WTC11 (cell line): ENCODE measurements at regions of chr22 and their contacts with region 1.

Region 1: DNA sequence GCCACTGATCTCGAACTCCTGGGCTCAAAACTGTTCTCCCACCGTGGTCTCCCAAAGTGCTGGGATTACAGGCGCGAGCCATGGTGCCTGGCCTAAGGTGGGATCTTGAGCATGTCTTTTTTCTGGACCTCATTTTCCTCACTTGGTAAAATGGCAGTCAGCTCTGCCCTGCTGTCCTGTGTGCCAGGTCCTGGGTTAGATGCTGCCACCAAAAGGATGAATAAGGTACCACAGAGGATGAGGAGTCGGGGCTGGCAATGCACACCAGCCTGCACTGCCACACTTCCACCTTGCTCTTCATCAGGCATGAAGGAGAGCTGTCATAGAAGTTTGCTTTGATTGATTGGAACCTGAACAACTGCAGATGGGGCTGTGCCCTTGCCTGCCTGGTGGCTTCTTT is 32.3 kb downstream of the ACO2 start:
- DNase-seq: no peak
- ATAC-seq: peak; percentile 78
- H3K4me3 Mint-ChIP-seq: no peak overlapping the region
- H3K27ac Mint-ChIP-seq: no peak overlapping the region
- H3K4me1 Mint-ChIP-seq: no peaks in the 10 kb centered on the region
- H3K27me3 Mint-ChIP-seq: no peaks in the 10 kb centered on the region
- CTCF ChIP-seq: no peak

Region 2: GRCh38 chr22:41479671-41480396 is 21.4 kb before region 1 on chr22:
- CTCF ChIA-PET with region 1: interaction called, 23 read pairs
- POLR2A ChIA-PET with region 1: interaction called, 3 read pairs
- DNase-seq: peak; percentile 15
- ATAC-seq: peak; percentile 48
- H3K4me3 Mint-ChIP-seq: no peak overlapping the region
- H3K27ac Mint-ChIP-seq: peak overlapping the region; percentile 14
- H3K4me1 Mint-ChIP-seq: peaks cover 40% of the 10 kb centered on the region
- H3K27me3 Mint-ChIP-seq: no peaks in the 10 kb centered on the region
- CTCF ChIP-seq: no peak

Region 3: DNA sequence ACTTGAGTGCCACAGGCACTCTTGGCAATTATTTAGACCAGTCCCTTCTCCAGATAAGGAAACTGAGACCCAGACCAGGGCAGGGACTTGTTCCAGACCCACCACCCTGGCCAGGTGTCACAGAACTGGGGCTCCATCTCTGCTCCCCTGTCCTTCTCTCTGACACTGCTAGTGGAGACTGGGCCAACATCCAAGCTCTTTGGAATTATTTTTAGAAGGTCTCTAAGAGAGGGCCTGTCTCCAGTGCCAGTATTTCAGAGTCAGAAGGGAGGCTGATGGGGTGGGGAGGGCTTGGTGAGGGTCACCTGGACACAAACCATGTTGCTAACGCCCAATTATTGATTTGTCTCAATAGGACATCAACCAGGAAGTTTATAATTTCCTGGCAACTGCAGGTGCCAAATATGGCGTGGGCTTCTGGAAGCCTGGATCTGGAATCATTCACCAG is 10.3 kb after region 1 on chr22:
- CTCF ChIA-PET with region 1: no interaction called
- POLR2A ChIA-PET with region 1: no interaction called
- DNase-seq: no peak
- ATAC-seq: no peak
- H3K4me3 Mint-ChIP-seq: no peak overlapping the region
- H3K27ac Mint-ChIP-seq: no peak overlapping the region
- H3K4me1 Mint-ChIP-seq: peaks cover 22% of the 10 kb centered on the region
- H3K27me3 Mint-ChIP-seq: no peaks in the 10 kb centered on the region
- CTCF ChIP-seq: no peak

Region 4: DNA sequence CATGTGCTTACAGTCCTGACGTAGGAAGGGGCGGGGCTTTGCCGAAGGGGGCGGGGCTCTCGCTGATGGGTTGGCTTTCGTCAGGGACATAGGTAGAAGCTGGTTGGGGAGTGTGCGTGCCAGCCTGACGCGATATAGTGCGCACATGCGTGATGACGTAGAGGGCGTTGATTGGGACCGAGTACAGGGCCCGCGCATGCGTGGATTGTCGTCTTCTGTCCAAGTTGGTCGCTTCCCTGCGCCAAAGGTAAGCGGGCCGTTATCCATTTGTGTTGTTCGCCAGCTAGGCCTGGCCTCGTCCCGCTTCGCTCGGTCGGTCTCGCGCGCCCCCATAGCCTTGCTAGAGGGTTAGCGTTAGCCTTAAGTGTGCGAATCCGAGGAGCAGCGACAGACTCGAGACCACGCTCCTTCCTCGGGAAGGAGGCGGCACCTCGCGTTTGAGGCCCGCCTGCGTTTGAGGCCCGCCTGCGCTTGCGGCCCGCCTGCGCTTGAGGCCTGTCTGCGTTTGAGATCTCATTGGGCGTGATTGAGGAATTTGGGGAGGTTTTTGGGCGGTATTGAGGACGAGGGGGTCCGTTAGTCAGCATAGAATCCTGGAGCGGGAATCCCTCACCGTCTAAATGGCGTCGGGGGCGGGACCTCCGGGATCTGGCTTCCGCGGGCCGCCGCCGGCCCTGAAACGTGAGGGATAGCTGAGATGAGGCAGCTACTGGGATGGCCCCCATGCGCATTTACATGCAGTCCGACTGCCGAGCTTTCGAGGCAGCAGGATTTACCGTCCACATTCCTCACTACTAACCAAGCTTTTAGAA is 120.1 kb after region 1 on chr22 and contains the start of gene XRCC6:
- CTCF ChIA-PET with region 1: no interaction called
- POLR2A ChIA-PET with region 1: no interaction called
- DNase-seq: peak; percentile 100
- ATAC-seq: peak; percentile 92
- H3K4me3 Mint-ChIP-seq: peak within 1 kb of the TSS; percentile 94
- H3K27ac Mint-ChIP-seq: peak within 1 kb of the TSS; percentile 99
- H3K4me1 Mint-ChIP-seq: peaks cover 20% of the 10 kb centered on the region
- H3K27me3 Mint-ChIP-seq: no peaks in the 10 kb centered on the region; the same call in 1 of the 2 replicates
- CTCF ChIP-seq: no peak
- total RNA-seq, gene XRCC6: 410 to 474 TPM (median 420 TPM) in 3 replicates